Activated T-helper 1 cell treated with anti-CD3 and anti-CD28 coated beads, Interleukin-12 subunit alpha, Interleukin-12 subunit beta, Interleukin-2, Interleukin-4 antibody, amounts not matched to agents 30 ng/mL and 10 ng/mL and 1 ng/mL, durations not matched to agents 14 hours and 24 hours and 36 hours (primary cell): ENCODE measurements at regions of chr5 and their contacts with region 1.

Region 1: GRCh38 chr5:68460147-68460798 is 244.7 kb downstream of the PIK3R1 start:
- DNase-seq: peak; percentile 11
- H3K4me3 Mint-ChIP-seq: no peak overlapping the region
- H3K27ac Mint-ChIP-seq: no peak overlapping the region
- H3K4me1 Mint-ChIP-seq: peaks cover 14% of the 10 kb centered on the region
- H3K27me3 Mint-ChIP-seq: peaks cover 6% of the 10 kb centered on the region

Region 2: GRCh38 chr5:67246108-67246507 is 1214.2 kb before region 1 on chr5:
- intact Hi-C with region 1: loop called (anchors 10 kb)
- DNase-seq: no peak
- H3K4me3 Mint-ChIP-seq: no peak overlapping the region
- H3K27ac Mint-ChIP-seq: no peak overlapping the region
- H3K4me1 Mint-ChIP-seq: no peaks in the 10 kb centered on the region
- H3K27me3 Mint-ChIP-seq: no peaks in the 10 kb centered on the region

Region 3: DNA sequence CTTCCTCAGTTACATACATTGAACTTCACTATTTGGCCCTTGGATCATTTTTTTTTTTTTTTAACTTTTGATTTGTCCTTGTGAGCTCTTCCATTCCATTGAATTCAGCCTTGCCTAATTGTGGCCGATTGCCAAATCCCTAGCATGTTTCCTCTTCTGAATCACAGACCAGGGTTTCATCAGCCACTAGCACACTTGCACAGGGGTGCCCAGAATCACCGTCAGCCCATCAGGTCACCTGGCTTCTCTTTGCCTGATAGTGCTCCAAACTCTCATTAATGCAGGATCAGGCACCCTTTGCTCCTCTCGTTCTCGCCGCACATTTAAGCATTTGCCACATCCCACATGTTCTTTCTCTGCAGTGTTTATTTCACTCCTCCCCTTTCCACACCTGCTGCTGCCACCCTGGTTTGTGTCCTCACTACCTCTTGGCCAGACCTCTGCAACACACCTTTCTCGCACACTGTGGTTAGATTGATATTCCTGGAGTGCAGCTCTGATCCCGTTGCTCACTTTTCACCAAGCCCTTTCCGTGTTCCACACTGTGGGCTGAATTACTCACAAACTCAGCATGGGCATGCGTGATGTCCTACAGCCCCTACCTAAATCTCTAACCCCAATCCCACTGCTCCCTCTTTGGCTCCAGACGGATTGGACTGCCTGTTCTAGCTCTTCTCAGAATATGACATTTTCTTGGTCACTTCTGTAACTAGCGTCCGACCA is 234.9 kb before region 1 on chr5:
- intact Hi-C with region 1: no loop called
- DNase-seq: no peak
- H3K4me3 Mint-ChIP-seq: no peak overlapping the region
- H3K27ac Mint-ChIP-seq: no peak overlapping the region
- H3K4me1 Mint-ChIP-seq: peaks cover 65% of the 10 kb centered on the region
- H3K27me3 Mint-ChIP-seq: no peaks in the 10 kb centered on the region

Region 4: GRCh38 chr5:68279984-68280383 is 180.3 kb before region 1 on chr5:
- intact Hi-C with region 1: no loop called
- DNase-seq: peak; percentile 44
- H3K4me3 Mint-ChIP-seq: peak overlapping the region; percentile 76
- H3K27ac Mint-ChIP-seq: peak overlapping the region; percentile 91
- H3K4me1 Mint-ChIP-seq: peaks cover 79% of the 10 kb centered on the region
- H3K27me3 Mint-ChIP-seq: no peaks in the 10 kb centered on the region

Region 5: GRCh38 chr5:68303038-68303738 is 157.1 kb before region 1 on chr5:
- intact Hi-C with region 1: loop called (anchors 5 kb)
- DNase-seq: no peak
- H3K4me3 Mint-ChIP-seq: no peak overlapping the region
- H3K27ac Mint-ChIP-seq: peak overlapping the region; percentile 70
- H3K4me1 Mint-ChIP-seq: peaks cover 34% of the 10 kb centered on the region
- H3K27me3 Mint-ChIP-seq: peaks cover 12% of the 10 kb centered on the region

Region 6: DNA sequence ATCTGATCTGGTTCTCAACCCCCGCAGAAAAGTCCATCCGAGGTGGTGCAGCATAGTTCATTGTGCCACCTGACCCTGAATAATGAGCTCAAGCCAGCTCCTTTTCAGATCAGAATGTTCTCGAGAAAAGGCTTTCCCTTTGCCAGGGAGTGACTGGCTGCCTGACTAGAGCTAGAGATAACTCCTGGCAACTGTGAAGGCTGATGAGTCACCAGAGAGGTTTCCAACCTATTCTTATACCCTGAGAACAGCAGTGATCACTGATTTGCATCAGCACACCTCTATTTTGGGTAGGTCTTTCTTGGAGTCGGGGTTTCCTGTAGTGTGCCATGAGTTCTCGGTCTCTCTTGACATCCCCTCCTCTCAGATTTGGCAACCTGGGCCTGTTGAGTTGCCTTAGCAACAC is 116.8 kb before region 1 on chr5:
- intact Hi-C with region 1: loop called (anchors 1 kb)
- DNase-seq: peak; percentile 6
- H3K4me3 Mint-ChIP-seq: no peak overlapping the region
- H3K27ac Mint-ChIP-seq: no peak overlapping the region
- H3K4me1 Mint-ChIP-seq: peaks cover 38% of the 10 kb centered on the region
- H3K27me3 Mint-ChIP-seq: peaks cover 7% of the 10 kb centered on the region

Region 7: GRCh38 chr5:68378204-68378824 is 82.0 kb before region 1 on chr5:
- intact Hi-C with region 1: loop called (anchors 1 kb)
- DNase-seq: no peak
- H3K4me3 Mint-ChIP-seq: no peak overlapping the region
- H3K27ac Mint-ChIP-seq: peak overlapping the region; percentile 14
- H3K4me1 Mint-ChIP-seq: peaks cover 58% of the 10 kb centered on the region
- H3K27me3 Mint-ChIP-seq: no peaks in the 10 kb centered on the region

Region 8: GRCh38 chr5:68424799-68425537 is 35.3 kb before region 1 on chr5:
- intact Hi-C with region 1: loop called (anchors 1 kb)
- DNase-seq: peak; percentile 20
- H3K4me3 Mint-ChIP-seq: peak overlapping the region; percentile 6
- H3K27ac Mint-ChIP-seq: peak overlapping the region; percentile 19
- H3K4me1 Mint-ChIP-seq: peaks cover 46% of the 10 kb centered on the region
- H3K27me3 Mint-ChIP-seq: peaks cover 5% of the 10 kb centered on the region

Region 9: GRCh38 chr5:68441309-68442073 is 18.8 kb before region 1 on chr5:
- intact Hi-C with region 1: loop called (anchors 1 kb)
- DNase-seq: peak; percentile 15
- H3K4me3 Mint-ChIP-seq: peak overlapping the region; percentile 27
- H3K27ac Mint-ChIP-seq: peak overlapping the region; percentile 76
- H3K4me1 Mint-ChIP-seq: peaks cover 33% of the 10 kb centered on the region
- H3K27me3 Mint-ChIP-seq: peaks cover 14% of the 10 kb centered on the region

Region 10: GRCh38 chr5:68484307-68485068 is 24.2 kb after region 1 on chr5:
- intact Hi-C with region 1: no loop called
- DNase-seq: no peak
- H3K4me3 Mint-ChIP-seq: no peak overlapping the region
- H3K27ac Mint-ChIP-seq: no peak overlapping the region
- H3K4me1 Mint-ChIP-seq: no peaks in the 10 kb centered on the region
- H3K27me3 Mint-ChIP-seq: peaks cover 16% of the 10 kb centered on the region